Right cardiac atrium (tissue), 5 donors: ENCODE measurements at regions of chr6 and their contacts with region 1.

Region 1: DNA sequence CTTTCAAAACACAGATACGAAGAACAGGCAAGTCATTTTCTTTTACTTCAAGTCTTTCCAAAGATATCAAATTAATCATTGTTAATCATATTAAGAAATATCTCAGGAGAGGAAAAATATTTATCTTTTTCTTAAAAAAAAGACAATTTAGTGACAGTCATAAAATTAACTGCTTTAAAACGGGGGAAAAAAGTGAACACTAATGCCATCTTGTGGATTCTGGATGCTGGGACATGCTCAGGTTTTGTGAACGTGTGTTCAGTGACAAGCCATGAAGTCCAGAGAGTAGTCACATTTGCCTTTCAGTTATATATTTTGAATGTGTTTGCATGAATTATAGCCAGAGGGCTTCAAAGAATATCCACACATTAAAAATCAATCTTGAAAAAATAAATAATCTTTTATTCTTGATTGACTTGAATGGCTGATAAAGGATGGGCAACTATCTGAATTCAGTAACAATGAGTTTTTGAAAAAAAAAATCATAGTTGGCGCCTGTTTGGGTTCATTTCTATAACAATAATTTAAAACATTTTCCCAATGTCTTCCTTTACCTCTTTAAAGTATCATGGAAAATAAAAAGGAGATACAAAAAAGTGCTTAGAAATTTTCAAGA is 74.7 kb upstream of the NOX3 start:
- DNase-seq: no peak
- ATAC-seq: no peak
- H3K4me3 ChIP-seq: no peak overlapping the region
- H3K27ac ChIP-seq: no peak overlapping the region
- H3K4me1 ChIP-seq: no peaks in the 10 kb centered on the region
- H3K27me3 ChIP-seq: no peaks in the 10 kb centered on the region

Region 2: GRCh38 chr6:154995284-154996015 is 534.9 kb before region 1 on chr6 and contains the start of gene TIAM2:
- intact Hi-C with region 1: no loop called
- DNase-seq: peak; percentile 46 to 68 (median 62)
- ATAC-seq: peak; percentile 71 to 78
- H3K4me3 ChIP-seq: peak within 1 kb of the TSS; percentile 32
- H3K27ac ChIP-seq: no peak within 1 kb of the TSS
- H3K4me1 ChIP-seq: no peaks in the 10 kb centered on the region
- H3K27me3 ChIP-seq: no peaks in the 10 kb centered on the region
- total RNA-seq, gene TIAM2: 9.2 to 13.9 (median 12.6) TPM

Region 3: DNA sequence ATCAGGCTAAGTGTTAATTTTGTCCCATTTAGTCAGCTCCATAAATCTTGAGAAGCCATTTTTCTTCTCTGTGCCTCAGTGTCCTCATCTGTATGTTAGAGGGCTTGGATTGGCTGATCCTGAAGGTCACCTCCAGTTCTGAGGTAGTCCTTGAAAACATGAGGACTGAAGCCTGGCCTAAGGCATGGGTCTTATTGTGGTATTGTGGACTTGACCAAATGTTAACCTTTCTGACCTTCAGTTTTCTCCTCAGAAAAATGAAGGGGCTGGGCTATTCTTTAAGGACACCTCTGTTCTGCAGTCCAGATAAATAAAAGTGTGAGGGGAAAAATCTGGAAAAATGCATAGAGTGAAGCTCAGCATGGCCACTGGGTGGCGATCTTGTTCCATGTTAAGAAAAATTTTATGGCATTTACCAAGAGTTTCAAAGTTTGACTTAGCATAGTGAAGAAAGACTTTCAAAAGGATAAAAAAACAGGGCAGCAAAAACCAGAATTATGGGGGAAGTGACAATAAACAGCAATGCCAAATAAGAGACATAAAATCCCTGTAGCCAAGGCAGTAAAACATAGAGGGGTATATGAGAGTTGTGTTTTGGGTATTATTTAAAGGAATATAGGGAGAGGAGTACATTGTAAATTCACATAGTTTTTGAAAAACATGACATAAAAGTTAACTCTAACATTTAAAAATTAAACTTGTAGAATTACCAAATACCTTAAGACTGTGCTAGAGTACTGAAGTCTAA is 202.8 kb before region 1 on chr6:
- intact Hi-C with region 1: loop called (anchors 5 to 10 kb)
- DNase-seq: peak in 2 of 3 donors; percentile 27 to 66
- ATAC-seq: peak; percentile 50 to 66
- H3K4me3 ChIP-seq: no peak overlapping the region
- H3K27ac ChIP-seq: no peak overlapping the region
- H3K4me1 ChIP-seq: no peaks in the 10 kb centered on the region
- H3K27me3 ChIP-seq: no peaks in the 10 kb centered on the region

Region 4: GRCh38 chr6:155333414-155333813 is 196.9 kb before region 1 on chr6:
- intact Hi-C with region 1: loop called (anchors 5 to 10 kb)
- DNase-seq: no peak
- ATAC-seq: no peak
- H3K4me3 ChIP-seq: no peak overlapping the region
- H3K27ac ChIP-seq: no peak overlapping the region
- H3K4me1 ChIP-seq: no peaks in the 10 kb centered on the region
- H3K27me3 ChIP-seq: no peaks in the 10 kb centered on the region